A549 (cell line): ENCODE measurements at regions of chr19 and their contacts with region 1.

Region 1: DNA sequence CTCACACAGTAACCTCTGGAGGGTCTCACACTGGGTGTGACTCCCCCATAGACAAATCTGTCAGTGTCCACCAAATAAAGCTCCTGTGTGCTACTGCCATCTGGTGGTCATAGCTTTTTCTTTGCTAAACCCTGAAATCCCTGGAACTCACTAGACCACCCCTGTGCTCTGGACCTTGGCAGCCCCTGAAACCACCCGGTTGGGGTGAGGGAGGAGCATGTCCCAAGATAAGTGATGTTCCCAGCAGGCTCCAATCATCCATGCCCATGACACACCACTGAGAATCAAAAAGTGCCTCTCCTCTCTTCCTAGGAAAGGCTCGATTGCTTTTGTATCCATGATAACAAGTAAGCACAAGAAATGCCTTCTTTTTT is 6.5 kb upstream of the HSD17B14 start:
- DNase-seq: peak; percentile 48 to 71
- ATAC-seq: peak; percentile 75 to 82
- H3K4me3 ChIP-seq: no peak overlapping the region
- H3K27ac ChIP-seq: no peak overlapping the region
- H3K4me1 ChIP-seq: 0 out of 3 replicates have a peak, but pooled peaks cover under 1% of the 10 kb centered on the region
- CTCF ChIP-seq: peak; percentile 97
- EP300 ChIP-seq: no peak
- POLR2A ChIP-seq: no peak
- RAD21 ChIP-seq: peak; percentile 86 to 89

Region 2: DNA sequence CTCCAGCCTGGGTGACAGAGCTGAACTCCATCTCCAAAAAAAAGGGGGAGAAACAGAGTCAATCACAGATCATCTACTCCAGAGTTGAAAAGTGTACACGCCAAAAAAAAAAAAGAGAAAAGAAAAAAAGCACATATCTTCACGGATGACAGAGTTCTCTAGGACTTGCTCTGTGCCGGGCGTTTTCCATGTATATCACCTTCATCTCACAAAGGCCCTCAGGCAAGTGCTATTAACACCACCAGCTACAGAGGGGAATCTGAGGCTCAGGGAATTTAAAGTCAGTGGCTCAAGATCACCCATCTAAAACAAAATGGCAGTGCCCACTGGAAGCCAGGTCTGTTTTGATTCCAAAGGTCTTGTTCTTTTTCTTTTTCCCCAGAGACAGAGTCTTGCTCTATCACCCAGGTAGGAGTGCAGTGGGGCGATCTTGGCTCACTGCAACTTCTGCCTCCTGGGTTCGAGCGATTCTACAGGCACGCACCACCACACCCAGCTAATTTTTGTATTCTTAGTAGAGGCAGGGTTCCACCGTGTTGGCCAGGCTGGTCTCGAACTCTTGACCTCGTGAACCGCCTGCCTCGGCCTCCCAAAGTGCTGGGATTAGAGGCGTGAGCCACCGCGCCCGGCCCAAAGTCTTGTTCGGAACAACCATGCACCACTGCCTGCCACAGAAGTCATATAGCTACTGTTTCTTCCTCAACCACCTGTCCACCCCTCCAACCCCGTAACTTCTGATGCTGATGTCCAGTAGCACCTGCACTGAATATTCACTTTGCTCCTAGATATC is 1669.9 kb before region 1 on chr19:
- CTCF ChIA-PET with region 1: no interaction called
- POLR2A ChIA-PET with region 1: no interaction called
- DNase-seq: no peak
- ATAC-seq: no peak
- H3K4me3 ChIP-seq: no peak overlapping the region
- H3K27ac ChIP-seq: no peak overlapping the region
- H3K4me1 ChIP-seq: peaks cover 11% of the 10 kb centered on the region; the same call in 2 of the 3 replicates
- CTCF ChIP-seq: no peak
- EP300 ChIP-seq: no peak
- POLR2A ChIP-seq: no peak
- RAD21 ChIP-seq: no peak

Region 3: GRCh38 chr19:48596679-48597465 is 245.9 kb before region 1 on chr19:
- CTCF ChIA-PET with region 1: no interaction called
- POLR2A ChIA-PET with region 1: no interaction called
- DNase-seq: no peak
- ATAC-seq: no peak
- H3K4me3 ChIP-seq: no peak overlapping the region
- H3K27ac ChIP-seq: no peak overlapping the region
- H3K4me1 ChIP-seq: peaks cover 3% of the 10 kb centered on the region
- CTCF ChIP-seq: no peak
- EP300 ChIP-seq: no peak
- POLR2A ChIP-seq: no peak
- RAD21 ChIP-seq: no peak

Region 4: GRCh38 chr19:48660854-48661731 is 181.7 kb before region 1 on chr19:
- CTCF ChIA-PET with region 1: interaction called, 10 read pairs
- POLR2A ChIA-PET with region 1: no interaction called
- DNase-seq: peak; percentile 91 to 96
- ATAC-seq: peak; percentile 70 to 88
- H3K4me3 ChIP-seq: no peak overlapping the region
- H3K27ac ChIP-seq: peak overlapping the region; percentile 5 to 61; a peak in 3 of 6 replicates
- H3K4me1 ChIP-seq: no peaks in the 10 kb centered on the region
- CTCF ChIP-seq: no peak
- EP300 ChIP-seq: no peak
- POLR2A ChIP-seq: no peak
- RAD21 ChIP-seq: no peak

Region 5: DNA sequence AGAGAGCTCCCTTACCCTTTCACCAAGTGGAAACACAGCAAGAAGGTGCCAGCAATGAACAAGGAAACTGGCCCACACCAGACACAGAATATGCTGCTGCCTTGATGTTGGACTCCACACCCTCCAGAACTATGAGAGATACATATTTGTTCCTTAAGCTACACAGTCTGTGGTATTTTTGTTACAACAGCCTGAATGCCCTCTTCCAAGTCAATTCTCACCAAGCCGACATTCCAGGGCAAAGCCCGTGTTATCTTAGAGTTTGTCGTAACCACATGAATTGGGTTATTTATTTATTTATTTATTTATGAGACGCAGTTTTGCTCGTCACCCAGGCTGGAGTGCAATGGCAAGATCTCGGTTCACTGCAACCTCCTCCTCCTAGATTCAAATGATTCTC is 72.5 kb before region 1 on chr19:
- CTCF ChIA-PET with region 1: interaction called, 11 read pairs
- POLR2A ChIA-PET with region 1: no interaction called
- DNase-seq: no peak
- ATAC-seq: peak in 1 of 2 experiments; percentile 53; a peak in 3 of 6 replicates
- H3K4me3 ChIP-seq: no peak overlapping the region
- H3K27ac ChIP-seq: no peak overlapping the region
- H3K4me1 ChIP-seq: 0 out of 3 replicates have a peak, but pooled peaks cover 4% of the 10 kb centered on the region
- CTCF ChIP-seq: no peak
- EP300 ChIP-seq: no peak
- POLR2A ChIP-seq: no peak
- RAD21 ChIP-seq: no peak

Region 6: DNA sequence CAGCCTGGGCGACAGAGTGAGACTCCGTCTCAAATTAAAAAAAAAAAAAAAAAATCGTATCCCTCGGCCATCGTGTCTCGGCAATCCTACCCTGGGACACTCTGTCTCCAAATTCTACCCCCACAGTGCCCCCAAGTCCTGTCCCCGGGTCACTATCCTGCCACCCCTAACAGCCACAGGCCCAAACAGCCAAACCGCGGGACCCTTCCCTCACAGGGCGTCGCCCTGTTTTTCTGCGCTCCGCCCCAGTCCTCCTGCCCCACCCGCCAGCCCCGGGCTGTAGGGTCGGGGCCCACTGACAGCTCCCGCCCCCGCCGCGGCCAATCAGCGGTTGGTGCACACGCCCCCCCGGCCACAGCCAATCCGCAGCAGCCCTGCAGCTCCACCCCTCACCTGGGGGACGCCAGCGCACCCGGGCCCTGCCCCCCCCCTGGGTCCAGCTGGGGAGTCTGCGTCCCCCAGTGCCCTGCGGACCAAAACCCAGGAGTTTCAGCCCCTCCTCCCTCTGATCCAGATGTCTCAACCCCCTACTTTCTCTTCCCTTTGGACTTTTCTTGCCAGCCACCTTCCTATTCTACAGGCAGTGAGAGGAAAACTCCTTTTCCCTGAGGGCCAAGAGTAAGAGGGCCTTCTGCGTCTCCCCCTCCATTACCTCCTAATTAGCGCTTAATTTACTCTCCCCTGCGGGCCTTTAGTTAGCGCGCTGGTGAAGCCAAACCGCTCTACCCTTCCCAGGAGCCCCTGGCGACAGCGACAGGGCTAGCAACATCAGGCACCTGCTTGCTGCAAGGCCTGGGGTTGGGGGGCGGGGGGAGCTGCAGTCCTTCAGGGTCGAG is 30.5 kb before region 1 on chr19:
- CTCF ChIA-PET with region 1: interaction called, 47 read pairs
- POLR2A ChIA-PET with region 1: no interaction called
- DNase-seq: peak; percentile 53 to 66
- ATAC-seq: peak; percentile 7 to 31; a peak in 3 of 6 replicates
- H3K4me3 ChIP-seq: peak overlapping the region; percentile 59; the same call in 2 of the 3 replicates
- H3K27ac ChIP-seq: peak overlapping the region in 1 of 2 experiments; percentile 87; a peak in 2 of 6 replicates
- H3K4me1 ChIP-seq: peaks cover 27% of the 10 kb centered on the region
- CTCF ChIP-seq: no peak
- EP300 ChIP-seq: no peak
- POLR2A ChIP-seq: no peak
- RAD21 ChIP-seq: no peak

Region 7: DNA sequence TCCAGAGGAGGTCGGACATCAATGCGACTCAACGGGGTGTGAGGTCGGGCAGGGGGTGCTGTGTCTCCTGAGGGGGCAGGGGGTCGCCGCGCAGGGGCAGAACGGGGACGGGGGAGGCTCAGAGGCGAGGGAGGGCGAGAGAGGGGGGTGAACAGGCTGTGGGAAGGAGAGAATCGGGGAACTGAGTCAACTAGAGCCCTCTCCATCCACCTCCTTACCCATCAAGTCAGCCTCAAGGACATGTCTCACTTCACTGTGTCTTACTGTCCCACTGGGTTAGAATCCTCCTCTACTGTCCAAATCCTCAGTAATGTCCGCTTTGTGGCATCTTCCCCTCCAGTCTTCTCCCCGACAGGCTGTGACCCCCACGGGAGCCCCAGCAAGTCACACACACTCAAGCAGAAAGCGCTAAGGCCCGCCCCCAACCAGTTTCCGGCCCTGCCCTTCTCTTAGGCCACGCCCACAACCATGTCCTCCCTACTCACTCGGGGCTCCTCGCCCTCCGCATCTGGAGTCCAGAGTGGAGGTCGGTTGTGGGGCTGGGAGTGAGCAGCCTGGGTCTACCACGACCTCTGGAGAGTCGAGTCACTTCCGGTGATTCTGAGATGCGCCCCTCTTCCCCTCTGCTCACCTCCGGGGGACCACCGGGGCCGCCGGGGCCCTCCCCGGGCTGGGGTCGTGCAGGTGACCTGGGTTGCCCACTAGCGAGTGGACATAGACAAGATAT is 16.4 kb after region 1 on chr19:
- CTCF ChIA-PET with region 1: interaction called, 116 read pairs
- POLR2A ChIA-PET with region 1: no interaction called
- DNase-seq: no peak
- ATAC-seq: peak; percentile 22 to 58; a peak in 4 of 6 replicates
- H3K4me3 ChIP-seq: no peak overlapping the region
- H3K27ac ChIP-seq: no peak overlapping the region
- H3K4me1 ChIP-seq: no peaks in the 10 kb centered on the region
- CTCF ChIP-seq: no peak
- EP300 ChIP-seq: no peak
- POLR2A ChIP-seq: no peak
- RAD21 ChIP-seq: no peak

Region 8: DNA sequence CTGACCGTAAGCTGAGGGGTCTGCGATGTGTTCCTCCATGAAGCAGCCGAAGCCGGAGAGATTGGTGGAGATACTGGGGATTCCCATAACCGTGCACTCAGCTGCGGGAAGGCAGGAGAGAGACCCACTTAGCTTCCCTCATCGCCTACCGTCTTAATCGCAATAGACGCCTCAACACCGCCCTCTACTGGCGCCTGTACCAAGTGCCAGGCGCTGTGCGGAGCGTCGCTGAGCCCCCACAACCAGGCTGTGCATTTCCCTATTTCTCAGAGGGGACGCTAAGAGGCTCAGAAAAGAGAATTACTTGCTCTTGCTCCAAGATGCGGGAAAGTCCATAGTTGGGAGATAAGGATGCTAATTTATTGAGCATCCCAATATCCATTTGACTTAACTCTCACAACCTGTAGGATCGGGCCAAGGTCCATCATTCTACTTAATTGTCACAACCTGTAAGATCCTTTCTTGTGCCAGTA is 128.2 kb after region 1 on chr19:
- CTCF ChIA-PET with region 1: interaction called, 114 read pairs
- POLR2A ChIA-PET with region 1: interaction called, 5 read pairs
- DNase-seq: peak; percentile 86 to 88
- ATAC-seq: peak; percentile 25 to 55
- H3K4me3 ChIP-seq: no peak overlapping the region
- H3K27ac ChIP-seq: peak overlapping the region in 1 of 2 experiments; percentile 63; a peak in 3 of 6 replicates
- H3K4me1 ChIP-seq: peaks cover 23% of the 10 kb centered on the region
- CTCF ChIP-seq: peak; percentile 98
- EP300 ChIP-seq: no peak
- POLR2A ChIP-seq: no peak
- RAD21 ChIP-seq: peak; percentile 96 to 97